GM13976 (cell line): ENCODE measurements at regions of chr7 and their contacts with region 1.

Region 1: DNA sequence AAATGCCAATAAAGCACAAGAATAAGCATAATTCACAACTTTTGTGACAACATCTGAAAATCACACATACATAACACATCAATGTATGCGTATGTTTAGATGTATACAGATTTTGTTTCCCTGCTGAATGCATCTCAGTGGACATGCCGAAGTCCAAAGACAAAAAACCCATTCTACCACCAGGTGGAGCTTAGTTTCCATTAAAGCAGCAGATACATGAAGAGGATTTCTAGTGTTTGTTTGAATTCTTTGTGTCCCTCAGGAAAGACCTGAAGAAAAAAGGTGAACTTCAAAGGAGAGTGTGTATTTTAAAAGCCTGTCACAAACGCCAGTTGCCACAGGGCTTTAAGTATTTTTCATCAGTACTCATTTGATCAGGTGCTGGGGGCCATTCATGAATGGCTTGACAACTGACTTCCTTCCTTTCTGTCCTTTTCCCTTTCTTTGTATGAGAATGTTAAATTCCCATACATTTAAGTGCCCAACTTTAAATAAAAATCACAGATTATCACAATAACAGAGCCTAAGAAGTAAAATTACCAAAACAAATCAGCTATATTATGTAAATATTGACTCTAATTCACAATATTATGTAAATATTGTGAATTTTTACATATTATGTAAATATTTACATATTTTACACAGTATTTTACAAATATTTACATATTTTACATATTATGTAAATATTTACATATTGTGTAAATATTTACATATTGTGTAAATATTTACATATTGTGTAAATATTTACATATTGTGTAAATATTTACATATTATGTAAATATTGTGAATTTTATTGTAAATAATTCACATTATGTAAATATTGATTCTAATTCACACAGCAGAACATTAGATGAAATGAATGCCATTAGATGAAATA is 343.0 kb downstream of the CRPPA start:
- DNase-seq: peak; percentile 24
- CTCF ChIP-seq: peak; percentile 59

Region 2: DNA sequence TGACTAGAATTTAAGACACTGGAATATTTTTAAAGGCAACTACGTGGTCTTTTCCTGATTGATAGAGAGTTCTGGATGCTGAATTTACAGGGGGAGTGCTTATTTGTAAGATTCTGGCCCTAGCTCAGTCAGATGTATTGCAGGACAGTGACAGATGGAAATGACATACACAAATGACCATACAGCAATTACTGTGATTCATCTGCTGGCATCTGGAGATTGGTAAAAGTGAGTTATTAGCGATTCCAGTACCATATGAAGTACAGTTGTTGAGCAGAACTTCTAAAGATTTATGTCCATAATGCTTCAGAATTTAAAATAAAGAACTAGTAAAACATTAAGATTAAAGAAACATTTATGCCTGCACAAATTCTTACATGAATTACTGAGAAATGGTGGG is 99.8 kb after region 1 on chr7:
- in situ Hi-C with region 1: no loop called
- DNase-seq: no peak
- CTCF ChIP-seq: no peak

Region 3: DNA sequence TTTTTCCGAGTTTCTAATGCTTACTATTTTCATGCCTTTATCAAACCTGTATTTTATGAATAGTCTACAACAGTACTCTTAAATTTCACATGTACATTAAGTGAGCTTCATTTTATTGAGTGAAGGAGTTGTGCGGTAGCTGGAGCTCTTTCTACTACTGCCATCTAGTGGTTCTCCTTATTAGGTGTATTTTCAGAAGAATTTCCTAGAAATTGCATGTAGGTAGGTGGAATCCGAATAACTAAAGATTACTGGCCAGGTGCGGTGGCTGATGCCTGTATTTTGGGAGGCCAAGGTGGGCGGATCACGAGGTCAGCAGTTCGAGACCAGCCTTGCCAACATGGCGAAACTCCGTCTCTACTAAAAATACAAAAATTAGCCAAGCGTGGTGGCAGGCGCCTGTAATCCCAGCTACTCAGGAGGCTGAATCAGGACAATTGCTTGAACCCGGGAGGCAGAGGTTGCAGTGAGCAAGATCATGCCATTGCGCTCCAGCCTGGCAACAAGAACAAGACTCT is 486.7 kb after region 1 on chr7:
- in situ Hi-C with region 1: loop called (anchors 25 kb)
- DNase-seq: peak; percentile 44
- CTCF ChIP-seq: peak; percentile 50